Caco-2 (cell line): ENCODE measurements at regions of chr7 and their contacts with region 1.

Region 1: DNA sequence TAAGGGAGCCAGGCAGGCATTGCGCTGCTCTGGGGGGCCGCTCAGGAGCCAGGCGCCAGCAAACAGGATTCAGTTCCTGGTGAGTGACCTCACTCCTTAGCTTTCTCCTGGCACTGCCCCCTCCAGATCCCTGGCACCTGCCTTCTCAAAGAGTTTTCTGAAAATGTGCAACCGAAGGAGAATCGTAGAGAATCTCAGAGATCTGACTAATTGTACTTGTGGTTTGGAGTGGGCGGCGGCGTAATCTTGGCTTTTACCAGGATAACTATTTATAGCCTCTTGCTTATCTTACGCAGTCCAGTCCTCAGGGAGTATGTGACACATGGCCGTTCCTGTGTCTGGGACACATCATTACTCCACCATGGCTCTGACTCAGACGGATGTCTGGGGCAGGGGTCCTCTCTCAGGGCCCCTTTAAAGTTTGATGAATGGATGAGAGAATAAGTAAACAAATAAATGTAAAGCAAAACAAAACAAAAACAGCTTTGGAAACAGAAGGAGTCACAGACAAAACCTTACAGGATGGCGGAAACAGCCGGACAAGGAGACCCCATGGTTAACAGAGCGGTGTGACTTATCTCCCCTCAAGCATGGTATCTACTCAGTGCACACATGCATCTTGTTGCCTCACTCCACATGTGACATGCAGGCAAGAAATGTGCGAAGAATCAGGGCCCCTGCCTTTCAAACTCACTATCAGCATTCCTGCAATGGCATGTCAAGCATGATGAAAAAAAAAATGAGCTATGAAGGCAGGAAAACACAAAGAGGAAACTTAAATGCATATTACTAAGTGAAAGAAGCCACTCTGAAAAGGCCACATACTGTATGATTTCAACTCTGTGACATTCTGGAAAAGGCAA is 99.7 kb downstream of the TNS3 start:
- DNase-seq: peak; percentile 62 to 66
- H3K4me3 ChIP-seq: no peak overlapping the region
- H3K4me3 Mint-ChIP-seq: peak overlapping the region; percentile 15
- H3K27ac Mint-ChIP-seq: peak overlapping the region; percentile 45
- H3K4me1 ChIP-seq: peaks cover 61% of the 10 kb centered on the region
- H3K4me1 Mint-ChIP-seq: peaks cover 44% of the 10 kb centered on the region
- H3K27me3 ChIP-seq: no peaks in the 10 kb centered on the region
- H3K27me3 Mint-ChIP-seq: no peaks in the 10 kb centered on the region
- CTCF ChIP-seq: no peak

Region 2: DNA sequence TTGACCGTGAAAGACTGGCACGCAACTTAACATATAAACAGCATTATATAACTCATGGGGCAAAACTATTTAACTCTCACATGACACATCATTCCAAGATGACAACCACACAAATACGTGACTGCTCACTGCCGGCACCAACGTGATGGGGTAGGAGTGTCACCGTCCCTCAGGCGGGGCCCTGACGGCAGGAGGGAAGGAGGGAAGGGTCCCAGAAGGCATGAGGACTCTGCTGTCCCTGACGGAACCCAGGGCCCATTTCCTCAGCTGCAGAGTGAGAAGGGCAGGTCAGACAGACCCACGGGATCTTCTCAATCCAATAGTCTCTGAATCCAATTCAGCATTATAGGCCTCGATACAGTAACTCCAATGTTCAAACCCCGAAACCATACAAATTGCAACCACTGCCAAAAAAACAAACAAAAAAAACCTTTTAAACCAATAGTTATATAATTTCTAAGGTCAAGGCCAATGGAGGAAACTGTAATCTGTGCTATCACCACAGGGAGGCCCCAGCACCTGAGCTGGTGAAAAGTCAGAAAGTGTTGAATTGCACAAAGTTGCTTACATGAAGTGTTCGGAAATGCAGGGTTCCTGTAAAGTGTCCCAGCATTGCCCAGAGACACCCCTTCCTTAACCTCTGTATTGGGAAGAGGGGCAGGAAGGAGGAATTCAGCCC is 37.7 kb before region 1 on chr7:
- CTCF ChIA-PET with region 1: no interaction called
- POLR2A ChIA-PET with region 1: no interaction called
- intact Hi-C with region 1: loop called (anchors 5 kb)
- DNase-seq: no peak
- H3K4me3 ChIP-seq: no peak overlapping the region
- H3K4me3 Mint-ChIP-seq: no peak overlapping the region
- H3K27ac Mint-ChIP-seq: peak overlapping the region; percentile 37
- H3K4me1 ChIP-seq: peaks cover 2% of the 10 kb centered on the region; the same call in 1 of the 2 replicates
- H3K4me1 Mint-ChIP-seq: peaks cover 43% of the 10 kb centered on the region
- H3K27me3 ChIP-seq: no peaks in the 10 kb centered on the region
- H3K27me3 Mint-ChIP-seq: no peaks in the 10 kb centered on the region
- CTCF ChIP-seq: peak; percentile 47 to 48

Region 3: DNA sequence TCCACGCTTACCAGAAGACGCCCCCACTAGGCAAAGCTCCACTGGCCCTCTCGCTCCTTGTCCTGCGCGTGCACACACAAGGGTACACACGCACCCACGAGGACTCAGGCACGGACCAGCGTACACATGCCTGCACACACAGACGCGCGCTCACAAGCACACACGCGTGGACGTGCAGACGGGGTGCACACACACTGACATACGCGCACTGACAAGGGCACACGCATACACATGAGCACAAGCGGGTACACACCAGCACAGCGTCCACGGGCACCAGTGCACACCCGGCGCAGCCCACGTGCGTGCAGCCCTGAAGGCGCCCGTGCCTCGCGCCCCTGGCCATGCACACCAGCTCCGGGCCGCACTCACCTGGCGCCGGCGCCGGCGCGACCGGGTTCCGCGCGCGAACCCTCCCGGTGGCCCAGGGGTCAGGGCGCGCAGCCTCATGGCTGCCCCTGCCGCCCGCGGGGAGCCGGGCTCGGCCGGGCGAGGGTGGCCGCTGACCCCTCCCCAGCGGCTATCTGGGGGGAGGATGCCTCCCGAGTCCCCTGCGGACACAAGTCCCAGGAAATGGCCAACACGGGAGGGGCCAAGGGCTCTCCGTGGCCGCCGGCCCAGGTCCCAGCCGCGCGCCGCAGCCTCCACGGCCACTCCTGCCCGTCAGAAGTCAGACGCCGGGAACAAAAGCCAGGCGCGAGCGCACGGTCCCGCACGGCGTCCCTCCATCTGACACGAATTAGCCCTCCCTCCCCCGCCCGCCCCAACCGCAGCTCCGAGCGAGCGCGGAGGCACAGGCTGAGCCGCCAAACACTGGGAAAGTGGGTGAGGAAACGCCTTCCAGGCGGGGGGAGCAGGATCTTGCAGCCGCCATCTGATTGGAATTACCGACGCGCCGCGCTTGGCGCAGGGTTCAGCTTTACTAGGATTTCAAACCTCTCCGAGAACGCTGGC is 54.7 kb after region 1 on chr7:
- CTCF ChIA-PET with region 1: no interaction called
- POLR2A ChIA-PET with region 1: no interaction called
- intact Hi-C with region 1: no loop called
- DNase-seq: no peak
- H3K4me3 ChIP-seq: no peak overlapping the region
- H3K4me3 Mint-ChIP-seq: peak overlapping the region; percentile 55
- H3K27ac Mint-ChIP-seq: peak overlapping the region; percentile 75
- H3K4me1 ChIP-seq: peaks cover 78% of the 10 kb centered on the region
- H3K4me1 Mint-ChIP-seq: peaks cover 54% of the 10 kb centered on the region
- H3K27me3 ChIP-seq: no peaks in the 10 kb centered on the region
- H3K27me3 Mint-ChIP-seq: no peaks in the 10 kb centered on the region
- CTCF ChIP-seq: no peak

Region 4: DNA sequence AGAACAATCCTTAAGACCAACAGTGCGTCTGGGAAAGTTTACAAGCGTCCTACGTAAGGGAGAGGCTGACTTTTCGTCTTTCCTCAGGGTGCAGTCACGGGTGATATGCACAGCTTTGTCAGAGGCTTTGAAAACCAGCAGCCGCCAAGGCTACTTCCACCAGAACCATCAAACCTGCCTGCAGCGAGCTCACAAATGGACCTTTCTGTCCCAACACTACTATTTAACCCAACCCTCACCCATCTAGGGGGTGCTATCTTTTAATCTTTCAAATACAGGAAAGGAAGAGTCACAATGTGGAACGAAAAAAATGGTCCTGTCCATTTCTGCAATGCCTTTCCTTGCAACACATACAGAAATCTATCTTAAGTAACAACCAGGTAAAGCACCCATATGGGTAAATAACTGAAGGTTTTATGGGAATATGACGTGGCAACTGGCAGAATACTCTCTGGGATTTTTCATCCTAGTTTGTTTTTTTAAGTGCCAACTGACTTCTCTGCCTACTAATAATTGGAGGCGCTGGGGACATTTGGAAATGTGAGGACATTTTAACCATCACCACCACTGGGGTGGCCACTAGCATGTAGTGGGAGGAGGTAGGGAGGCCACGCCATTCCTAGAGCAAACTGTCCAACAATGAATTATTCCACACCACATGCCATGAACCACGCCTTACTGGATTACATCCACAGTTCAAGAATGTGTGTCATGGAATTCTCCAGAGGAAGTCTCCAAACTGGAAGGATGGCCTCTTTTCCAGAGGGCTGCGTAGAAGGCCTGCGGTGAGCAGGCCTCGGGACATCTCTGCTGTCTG is 75.1 kb after region 1 on chr7:
- CTCF ChIA-PET with region 1: no interaction called
- POLR2A ChIA-PET with region 1: no interaction called
- intact Hi-C with region 1: loop called (anchors 5 kb)
- DNase-seq: no peak
- H3K4me3 ChIP-seq: no peak overlapping the region
- H3K4me3 Mint-ChIP-seq: peak overlapping the region; percentile 37
- H3K27ac Mint-ChIP-seq: peak overlapping the region; percentile 92
- H3K4me1 ChIP-seq: peaks cover 81% of the 10 kb centered on the region
- H3K4me1 Mint-ChIP-seq: peaks cover 61% of the 10 kb centered on the region
- H3K27me3 ChIP-seq: no peaks in the 10 kb centered on the region
- H3K27me3 Mint-ChIP-seq: no peaks in the 10 kb centered on the region
- CTCF ChIP-seq: no peak

Region 5: GRCh38 chr7:47581806-47582763 is 99.8 kb after region 1 on chr7 and contains the start of gene TNS3:
- CTCF ChIA-PET with region 1: no interaction called
- POLR2A ChIA-PET with region 1: interaction called, 10 read pairs
- intact Hi-C with region 1: no loop called
- DNase-seq: peak; percentile 63 to 83
- H3K4me3 ChIP-seq: peak within 1 kb of the TSS; percentile 88
- H3K4me3 Mint-ChIP-seq: peak within 1 kb of the TSS; percentile 98
- H3K27ac Mint-ChIP-seq: peak within 1 kb of the TSS; percentile 92
- H3K4me1 ChIP-seq: peaks cover 59% of the 10 kb centered on the region
- H3K4me1 Mint-ChIP-seq: peaks cover 53% of the 10 kb centered on the region
- H3K27me3 ChIP-seq: no peaks in the 10 kb centered on the region
- H3K27me3 Mint-ChIP-seq: no peaks in the 10 kb centered on the region
- CTCF ChIP-seq: peak in 1 of 2 experiments; percentile 10
- total RNA-seq, gene TNS3: 252 and 263 TPM in 2 replicates